Activated CD4-positive, alpha-beta T cell treated with anti-CD3 and anti-CD28 coated beads, Interleukin-2, amount 10 ng/mL, durations not matched to agents 24 days and 14 days (primary cell): ENCODE measurements at regions of chr12 and their contacts with region 1.

Region 1: GRCh38 chr12:67268896-67269631 is at the start of gene CAND1:
- DNase-seq: peak; percentile 99
- H3K4me3 Mint-ChIP-seq: peak within 1 kb of the TSS; percentile 90
- H3K27ac Mint-ChIP-seq: peak within 1 kb of the TSS; percentile 100
- H3K4me1 Mint-ChIP-seq: peaks cover 30% of the 10 kb centered on the region
- H3K27me3 Mint-ChIP-seq: no peaks in the 10 kb centered on the region
- total RNA-seq, gene CAND1: 202 and 216 TPM in 2 replicates

Region 2: GRCh38 chr12:67068761-67069450 is 200.2 kb before region 1 on chr12:
- intact Hi-C with region 1: loop called (anchors 2 kb)
- DNase-seq: peak; percentile 76
- H3K4me3 Mint-ChIP-seq: peak overlapping the region; percentile 86
- H3K27ac Mint-ChIP-seq: peak overlapping the region; percentile 25
- H3K4me1 Mint-ChIP-seq: peaks cover 12% of the 10 kb centered on the region
- H3K27me3 Mint-ChIP-seq: peaks cover 62% of the 10 kb centered on the region